Tibial artery (tissue), 4 donors: ENCODE measurements at regions of chr6 and their contacts with region 1.

Region 1: GRCh38 chr6:124870611-124871459 is 91.4 kb upstream of the RNF217 start:
- DNase-seq: no peak
- H3K4me3 ChIP-seq: no peak overlapping the region
- H3K27ac ChIP-seq: no peak overlapping the region
- H3K4me1 ChIP-seq: peaks cover 0 to 7% (median 0%) of the 10 kb centered on the region in 4 donors
- H3K27me3 ChIP-seq: no peaks in the 10 kb centered on the region
- CTCF ChIP-seq: peak; percentile 70 to 79

Region 2: DNA sequence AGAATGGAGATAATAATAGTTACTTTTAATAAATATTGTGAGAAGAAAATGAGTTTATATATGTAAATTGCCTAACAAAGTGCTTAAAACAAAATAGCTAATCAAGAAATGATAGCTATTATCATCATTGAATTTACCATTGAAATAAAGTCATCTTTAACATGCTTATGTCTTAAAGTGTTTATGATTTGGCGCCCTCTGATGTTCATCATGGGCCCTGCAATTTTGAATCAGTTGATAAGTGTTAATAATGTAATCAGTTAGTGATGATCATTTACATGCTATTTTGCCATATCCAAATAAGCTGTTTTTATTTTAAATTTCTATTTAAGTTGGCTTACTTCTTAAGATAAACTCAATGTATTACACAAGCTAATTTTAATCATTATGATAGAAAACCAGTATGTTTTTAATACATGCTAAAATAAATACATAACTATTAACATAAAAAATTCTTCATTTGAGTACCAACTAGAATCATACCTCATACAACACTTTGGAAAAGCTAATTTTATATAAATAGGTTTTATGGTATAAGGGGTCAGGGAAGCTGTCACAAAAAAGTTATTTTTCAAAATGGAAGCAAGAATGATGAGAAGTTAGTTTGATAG is 243.5 kb after region 1 on chr6:
- intact Hi-C with region 1: loop called (anchors 5 kb)
- DNase-seq: peak in 1 of 2 donors; percentile 82
- H3K4me3 ChIP-seq: no peak overlapping the region
- H3K27ac ChIP-seq: no peak overlapping the region
- H3K4me1 ChIP-seq: no peaks in the 10 kb centered on the region
- H3K27me3 ChIP-seq: no peaks in the 10 kb centered on the region
- CTCF ChIP-seq: peak; percentile 81 to 82

Region 3: GRCh38 chr6:125129354-125129753 is 258.5 kb after region 1 on chr6:
- intact Hi-C with region 1: loop called (anchors 5 kb)
- DNase-seq: no peak
- H3K4me3 ChIP-seq: no peak overlapping the region
- H3K27ac ChIP-seq: no peak overlapping the region
- H3K4me1 ChIP-seq: peaks cover 0 to under 1% (median 0%) of the 10 kb centered on the region in 4 donors
- H3K27me3 ChIP-seq: no peaks in the 10 kb centered on the region
- CTCF ChIP-seq: no peak